ENCODE measurements at regions of chr9 and their contacts with region 1.

Region 1: GRCh38 chr9:124392871-124393460 is 22.3 kb downstream of the PSMB7 start:
- DNase-seq: peak; percentile 87 to 89
- ATAC-seq: peak; percentile 88
- H3K4me3 ChIP-seq: 0 out of 3 replicates have a peak overlapping the region, but pooled peaks have one; percentile 6
- H3K27ac ChIP-seq: peak overlapping the region; percentile 68 to 84
- H3K4me1 ChIP-seq: peaks cover 69% of the 10 kb centered on the region
- CTCF ChIP-seq: peak; percentile 56
- EP300 ChIP-seq: peak in 1 of 2 experiments; percentile 68; a peak in 2 of 5 replicates
- POLR2A ChIP-seq: no peak
- RAD21 ChIP-seq: peak; percentile 58 to 70; a peak in 4 of 5 replicates

Region 2: DNA sequence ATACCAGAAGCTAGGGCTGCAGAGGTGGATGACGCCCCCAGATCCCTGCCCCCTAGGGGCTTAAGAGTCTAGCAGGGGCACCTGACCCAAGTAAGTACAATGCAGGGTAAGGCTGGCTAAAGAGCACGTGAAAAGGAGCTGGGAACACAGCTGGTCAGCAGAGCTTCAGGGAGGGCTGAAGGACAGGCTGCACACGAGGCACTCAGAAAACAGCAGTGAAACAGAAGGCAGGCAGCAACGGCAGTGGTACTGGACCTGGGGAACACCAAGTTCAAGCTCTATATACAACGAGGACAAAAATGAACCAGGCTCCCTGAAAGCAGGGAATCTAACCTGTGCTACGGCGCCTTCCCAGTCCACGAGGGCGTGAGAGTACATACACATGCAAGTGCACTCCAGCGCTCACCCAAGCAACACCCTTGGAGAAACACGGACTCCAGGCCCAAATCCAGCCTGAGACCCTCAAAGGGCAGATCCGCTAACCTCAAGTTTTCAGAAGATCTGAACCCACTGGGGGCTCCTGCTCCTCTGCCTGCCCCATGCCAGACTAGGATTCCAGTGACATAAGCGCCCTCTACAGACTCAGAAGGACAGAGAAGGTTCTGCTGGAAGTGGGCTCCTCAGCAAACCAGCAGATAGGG is 35.1 kb before region 1 on chr9:
- CTCF ChIA-PET with region 1: interaction called, 17 read pairs
- POLR2A ChIA-PET with region 1: no interaction called
- DNase-seq: no peak
- ATAC-seq: peak in 1 of 2 experiments; percentile 53; a peak in 3 of 6 replicates
- H3K4me3 ChIP-seq: no peak overlapping the region
- H3K27ac ChIP-seq: no peak overlapping the region
- H3K4me1 ChIP-seq: no peaks in the 10 kb centered on the region
- CTCF ChIP-seq: peak; percentile 36
- EP300 ChIP-seq: no peak
- POLR2A ChIP-seq: no peak
- RAD21 ChIP-seq: peak; percentile 24 to 49; a peak in 2 of 5 replicates

Region 3: DNA sequence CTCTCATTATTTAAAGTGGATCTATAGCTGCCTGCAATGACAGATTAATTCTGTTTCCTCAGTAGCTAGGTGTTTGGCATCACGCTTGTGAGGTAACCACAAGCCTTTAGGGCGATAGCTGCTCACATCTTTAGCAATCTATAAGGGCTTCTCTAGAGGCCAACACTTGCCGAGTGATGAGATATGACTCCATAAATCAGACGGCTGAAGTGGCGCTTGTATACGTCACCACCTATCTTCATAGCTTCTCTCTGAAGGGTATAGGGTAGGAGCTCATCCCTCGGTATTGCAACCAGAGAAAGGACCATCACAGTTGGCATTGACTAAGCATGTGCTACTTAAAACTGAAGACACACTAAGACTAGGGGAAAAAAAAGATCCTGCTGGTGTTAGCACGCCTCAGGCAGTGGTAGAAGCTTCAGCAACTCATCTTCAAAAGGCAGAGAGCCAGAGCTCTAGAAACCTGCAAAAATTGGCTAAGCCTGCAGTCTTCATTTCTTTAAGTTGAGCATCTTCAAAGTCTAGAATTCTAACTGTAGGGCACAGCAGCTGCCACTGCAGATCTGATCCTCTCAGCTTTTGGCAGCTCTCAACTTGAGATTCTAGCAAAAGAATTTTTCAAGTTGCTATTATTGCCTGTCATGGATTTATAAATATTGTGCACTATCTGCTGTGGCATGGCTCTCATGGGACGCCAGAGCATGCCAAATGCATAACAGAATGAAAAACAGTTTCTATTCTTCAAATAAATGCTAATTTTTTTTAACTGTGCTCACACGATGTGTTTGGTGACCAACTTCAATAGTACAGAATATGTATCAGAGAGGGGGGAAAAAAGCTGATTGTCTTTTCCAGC is 15.2 kb before region 1 on chr9:
- CTCF ChIA-PET with region 1: interaction called, 429 read pairs
- POLR2A ChIA-PET with region 1: no interaction called
- DNase-seq: no peak
- ATAC-seq: 0 out of 6 replicates have a peak, but pooled peaks of 1 of the 2 experiments have one; percentile 12
- H3K4me3 ChIP-seq: no peak overlapping the region
- H3K27ac ChIP-seq: no peak overlapping the region
- H3K4me1 ChIP-seq: no peaks in the 10 kb centered on the region
- CTCF ChIP-seq: no peak
- EP300 ChIP-seq: no peak
- POLR2A ChIP-seq: no peak
- RAD21 ChIP-seq: no peak

Region 4: DNA sequence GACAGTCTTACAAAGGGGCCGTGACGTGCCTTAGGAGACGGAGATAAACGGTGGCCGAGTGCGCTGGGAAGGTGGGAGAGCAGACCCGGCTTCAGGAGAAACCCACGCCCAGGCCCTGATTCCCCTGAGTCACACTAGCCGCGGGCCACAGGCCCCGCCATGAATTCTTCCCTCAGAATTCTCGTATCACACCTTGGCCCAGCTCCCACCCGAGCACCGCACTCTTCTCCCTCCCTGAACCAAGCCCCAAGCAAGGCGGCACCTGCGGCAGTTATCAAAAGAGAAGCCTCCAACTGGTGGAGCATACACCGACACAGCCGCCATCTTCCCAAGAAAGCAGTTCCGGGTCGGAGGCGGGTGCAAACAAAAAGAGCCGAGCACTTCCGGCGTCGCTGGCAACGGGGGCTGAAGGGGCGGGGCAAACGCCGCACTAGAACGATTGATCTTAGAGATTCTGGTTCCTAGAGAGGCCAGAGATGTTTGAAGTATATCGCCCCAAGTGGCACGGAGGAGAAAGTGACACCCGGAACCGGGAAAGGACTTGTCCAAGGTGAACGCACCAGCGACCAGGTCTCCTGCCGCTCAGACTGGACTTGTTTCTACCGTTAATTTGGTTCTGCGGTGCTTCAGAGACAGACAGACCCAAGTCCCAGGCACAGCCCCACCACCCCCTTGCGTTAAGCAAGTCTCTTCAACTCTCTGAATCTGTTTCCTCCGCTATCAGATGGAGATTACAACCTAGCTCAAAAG is 22.3 kb after region 1 on chr9 and contains the start of gene PSMB7:
- CTCF ChIA-PET with region 1: interaction called, 429 read pairs
- POLR2A ChIA-PET with region 1: no interaction called
- DNase-seq: peak; percentile 92 to 99
- ATAC-seq: peak; percentile 86 to 90
- H3K4me3 ChIP-seq: peak within 1 kb of the TSS; percentile 80
- H3K27ac ChIP-seq: peak within 1 kb of the TSS; percentile 70 to 91
- H3K4me1 ChIP-seq: peaks cover 35% of the 10 kb centered on the region
- CTCF ChIP-seq: peak; percentile 71
- EP300 ChIP-seq: no peak
- POLR2A ChIP-seq: peak; percentile 41; the same call in 1 of the 2 replicates
- RAD21 ChIP-seq: no peak
- polyA plus RNA-seq, gene PSMB7: 418 and 429 TPM in 2 replicates

Region 5: GRCh38 chr9:124428751-124429529 is 36.0 kb after region 1 on chr9:
- CTCF ChIA-PET with region 1: no interaction called
- POLR2A ChIA-PET with region 1: no interaction called
- DNase-seq: no peak
- ATAC-seq: no peak
- H3K4me3 ChIP-seq: no peak overlapping the region
- H3K27ac ChIP-seq: no peak overlapping the region
- H3K4me1 ChIP-seq: no peaks in the 10 kb centered on the region
- CTCF ChIP-seq: no peak
- EP300 ChIP-seq: no peak
- POLR2A ChIP-seq: no peak
- RAD21 ChIP-seq: no peak